PC-9 (cell line): ENCODE measurements at regions of chr7 and their contacts with region 1.

Region 1: GRCh38 chr7:140625908-140626868 is 14.4 kb downstream of the DENND2A start:
- DNase-seq: peak; percentile 95 to 98
- H3K4me3 ChIP-seq: no peak overlapping the region
- H3K27ac ChIP-seq: peak overlapping the region; percentile 79
- H3K4me1 ChIP-seq: peaks cover 75% of the 10 kb centered on the region
- H3K27me3 ChIP-seq: no peaks in the 10 kb centered on the region
- CTCF ChIP-seq: no peak

Region 2: GRCh38 chr7:140517546-140518369 is 108.4 kb before region 1 on chr7:
- CTCF ChIA-PET with region 1: interaction called, 3 read pairs
- POLR2A ChIA-PET with region 1: no interaction called
- intact Hi-C with region 1: loop called (anchors 1 kb)
- DNase-seq: peak; percentile 78 to 92
- H3K4me3 ChIP-seq: no peak overlapping the region
- H3K27ac ChIP-seq: no peak overlapping the region
- H3K4me1 ChIP-seq: peaks cover 11% of the 10 kb centered on the region
- H3K27me3 ChIP-seq: no peaks in the 10 kb centered on the region
- CTCF ChIP-seq: peak; percentile 96

Region 3: DNA sequence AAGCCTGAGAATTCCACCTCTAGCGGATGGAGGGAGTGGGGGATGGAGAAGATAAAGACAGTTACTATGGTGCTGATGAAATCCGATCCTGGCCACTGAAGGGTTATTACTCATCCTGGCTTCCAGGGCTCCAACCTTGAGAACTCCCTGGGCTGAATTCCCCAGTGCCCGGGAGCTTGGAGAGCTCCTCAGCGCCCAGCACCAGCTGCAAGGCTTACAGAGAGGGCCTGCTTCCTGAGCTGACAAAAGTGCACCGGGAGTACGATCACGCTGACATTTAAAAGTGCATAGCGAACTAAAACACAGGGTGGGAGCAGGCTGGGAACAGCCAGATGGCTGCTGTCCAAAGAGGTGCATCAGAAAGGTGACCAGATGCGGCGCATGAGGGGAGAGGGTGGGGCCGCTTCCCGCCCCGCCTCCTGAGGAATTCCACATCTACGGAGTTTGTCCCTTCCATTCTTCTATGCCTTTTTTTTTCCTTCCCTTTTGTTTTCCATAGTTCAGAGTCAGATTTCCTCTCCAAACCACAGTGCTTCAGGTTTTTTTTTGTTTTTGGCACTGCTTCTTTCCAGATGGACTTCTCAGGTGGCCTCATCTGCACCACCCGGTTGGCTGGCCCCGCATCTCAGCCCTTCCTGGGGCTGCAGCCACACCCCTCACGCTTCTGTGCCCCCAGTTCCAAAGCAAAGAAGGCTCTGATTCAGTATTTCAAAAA is 84.5 kb before region 1 on chr7:
- CTCF ChIA-PET with region 1: no interaction called
- POLR2A ChIA-PET with region 1: interaction called, 15 read pairs
- intact Hi-C with region 1: no loop called
- DNase-seq: peak; percentile 68 to 82
- H3K4me3 ChIP-seq: peak overlapping the region; percentile 40; the same call in 1 of the 2 replicates
- H3K27ac ChIP-seq: peak overlapping the region; percentile 54
- H3K4me1 ChIP-seq: peaks cover 19% of the 10 kb centered on the region
- H3K27me3 ChIP-seq: no peaks in the 10 kb centered on the region
- CTCF ChIP-seq: no peak

Region 4: DNA sequence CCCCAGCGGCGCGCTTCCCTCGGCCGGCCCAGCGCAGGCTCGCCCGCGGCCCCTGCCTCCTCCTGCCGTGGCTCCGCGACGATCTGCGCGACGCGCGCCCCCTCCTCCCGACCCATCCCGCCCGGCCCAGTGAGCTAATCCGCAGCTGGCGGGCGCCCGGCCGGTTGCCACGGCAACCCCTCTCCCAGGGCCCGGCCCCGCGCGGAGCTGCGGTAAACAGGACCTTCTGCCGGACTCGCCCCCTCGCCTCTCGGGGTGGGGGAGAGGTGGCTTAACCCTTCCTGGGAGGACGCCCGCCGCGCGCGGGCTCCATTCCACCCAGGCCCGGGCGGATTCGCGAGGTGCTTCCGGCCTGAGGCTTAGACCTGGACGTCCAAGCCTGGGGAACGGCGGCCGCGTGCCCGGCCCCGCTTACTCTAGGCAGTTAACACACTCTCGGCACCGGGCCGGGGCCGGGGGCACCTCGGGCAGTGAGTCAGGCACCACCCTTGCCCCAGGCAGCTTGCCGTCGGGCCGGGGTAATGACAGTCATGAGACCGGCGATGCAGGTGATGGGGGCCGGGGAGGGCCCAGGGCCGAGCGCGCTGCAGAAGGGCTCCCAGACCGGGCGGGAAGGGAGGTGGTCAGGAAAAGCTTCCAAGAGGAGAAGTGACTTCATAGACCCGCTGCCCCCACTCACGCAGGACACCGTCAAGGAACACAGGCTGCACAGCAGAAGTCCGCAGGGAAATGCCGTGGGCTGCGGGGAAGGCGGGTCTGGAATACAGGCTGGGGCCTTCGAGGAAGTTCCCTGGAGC is 14.7 kb after region 1 on chr7 and contains the start of gene DENND2A:
- CTCF ChIA-PET with region 1: interaction called, 12 read pairs
- POLR2A ChIA-PET with region 1: interaction called, 8 read pairs
- intact Hi-C with region 1: no loop called
- DNase-seq: peak in 1 of 2 experiments; percentile 49
- H3K4me3 ChIP-seq: peak within 1 kb of the TSS; percentile 88
- H3K27ac ChIP-seq: peak within 1 kb of the TSS; percentile 0; the same call in 1 of the 2 replicates
- H3K4me1 ChIP-seq: peaks cover 43% of the 10 kb centered on the region
- H3K27me3 ChIP-seq: no peaks in the 10 kb centered on the region
- CTCF ChIP-seq: no peak
- total RNA-seq, gene DENND2A: 3.7 and 4.2 TPM in 2 replicates